Activated CD4-positive, alpha-beta T cell treated with anti-CD3 and anti-CD28 coated beads, Interleukin-2, amount 10 ng/mL, durations not matched to agents 7 days and 5 days (primary cell): ENCODE measurements at regions of chr3 and their contacts with region 1.

Region 1: GRCh38 chr3:114290911-114291901 is 2.6 kb upstream of the TIGIT start:
- DNase-seq: peak; percentile 81
- H3K4me3 Mint-ChIP-seq: peak overlapping the region; percentile 3
- H3K27ac Mint-ChIP-seq: peak overlapping the region; percentile 69
- H3K4me1 Mint-ChIP-seq: peaks cover 5% of the 10 kb centered on the region
- H3K27me3 Mint-ChIP-seq: no peaks in the 10 kb centered on the region

Region 2: DNA sequence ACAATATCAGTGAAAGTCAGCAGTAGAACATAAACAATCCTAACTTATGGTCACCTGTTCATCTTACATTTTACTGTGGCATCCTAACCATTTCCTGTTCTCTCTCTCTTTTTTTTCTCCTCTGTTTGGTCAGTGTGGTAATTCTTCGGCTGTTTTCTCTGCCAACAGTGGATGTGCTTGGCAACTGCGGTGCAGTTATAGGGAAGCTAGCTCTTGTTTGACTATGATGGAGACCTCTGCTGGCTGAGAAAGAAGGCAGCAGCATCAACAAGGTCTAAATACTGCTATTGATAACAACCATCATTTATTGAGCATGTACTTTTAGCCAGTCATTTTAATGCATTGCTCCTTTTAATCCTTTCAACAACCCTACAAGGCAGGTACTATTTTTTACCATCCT is 111.6 kb before region 1 on chr3:
- CTCF ChIA-PET with region 1: no interaction called
- POLR2A ChIA-PET with region 1: no interaction called
- DNase-seq: peak; percentile 6
- H3K4me3 Mint-ChIP-seq: no peak overlapping the region
- H3K27ac Mint-ChIP-seq: no peak overlapping the region
- H3K4me1 Mint-ChIP-seq: peaks cover 2% of the 10 kb centered on the region
- H3K27me3 Mint-ChIP-seq: peaks cover 22% of the 10 kb centered on the region

Region 3: GRCh38 chr3:114323546-114324254 is 32.5 kb after region 1 on chr3:
- CTCF ChIA-PET with region 1: interaction called, 13 read pairs
- POLR2A ChIA-PET with region 1: interaction called, 4 read pairs
- DNase-seq: no peak
- H3K4me3 Mint-ChIP-seq: no peak overlapping the region
- H3K27ac Mint-ChIP-seq: no peak overlapping the region
- H3K4me1 Mint-ChIP-seq: peaks cover 12% of the 10 kb centered on the region
- H3K27me3 Mint-ChIP-seq: no peaks in the 10 kb centered on the region

Region 4: GRCh38 chr3:114404590-114404989 is 113.4 kb after region 1 on chr3:
- CTCF ChIA-PET with region 1: no interaction called
- POLR2A ChIA-PET with region 1: no interaction called
- DNase-seq: no peak
- H3K4me3 Mint-ChIP-seq: no peak overlapping the region
- H3K27ac Mint-ChIP-seq: no peak overlapping the region
- H3K4me1 Mint-ChIP-seq: no peaks in the 10 kb centered on the region
- H3K27me3 Mint-ChIP-seq: peaks cover 4% of the 10 kb centered on the region